ENCODE measurements at regions of chr17 and their contacts with region 1.

Region 1: GRCh38 chr17:27245230-27245696 is 48.7 kb upstream of the WSB1 start:
- DNase-seq: peak; percentile 91
- ATAC-seq: peak; percentile 86 to 91
- H3K4me3 ChIP-seq: peak overlapping the region; percentile 34
- H3K27ac ChIP-seq: peak overlapping the region; percentile 87
- H3K4me1 ChIP-seq: peaks cover 81% of the 10 kb centered on the region
- H3K27me3 ChIP-seq: no peaks in the 10 kb centered on the region
- CTCF ChIP-seq: peak; percentile 78

Region 2: DNA sequence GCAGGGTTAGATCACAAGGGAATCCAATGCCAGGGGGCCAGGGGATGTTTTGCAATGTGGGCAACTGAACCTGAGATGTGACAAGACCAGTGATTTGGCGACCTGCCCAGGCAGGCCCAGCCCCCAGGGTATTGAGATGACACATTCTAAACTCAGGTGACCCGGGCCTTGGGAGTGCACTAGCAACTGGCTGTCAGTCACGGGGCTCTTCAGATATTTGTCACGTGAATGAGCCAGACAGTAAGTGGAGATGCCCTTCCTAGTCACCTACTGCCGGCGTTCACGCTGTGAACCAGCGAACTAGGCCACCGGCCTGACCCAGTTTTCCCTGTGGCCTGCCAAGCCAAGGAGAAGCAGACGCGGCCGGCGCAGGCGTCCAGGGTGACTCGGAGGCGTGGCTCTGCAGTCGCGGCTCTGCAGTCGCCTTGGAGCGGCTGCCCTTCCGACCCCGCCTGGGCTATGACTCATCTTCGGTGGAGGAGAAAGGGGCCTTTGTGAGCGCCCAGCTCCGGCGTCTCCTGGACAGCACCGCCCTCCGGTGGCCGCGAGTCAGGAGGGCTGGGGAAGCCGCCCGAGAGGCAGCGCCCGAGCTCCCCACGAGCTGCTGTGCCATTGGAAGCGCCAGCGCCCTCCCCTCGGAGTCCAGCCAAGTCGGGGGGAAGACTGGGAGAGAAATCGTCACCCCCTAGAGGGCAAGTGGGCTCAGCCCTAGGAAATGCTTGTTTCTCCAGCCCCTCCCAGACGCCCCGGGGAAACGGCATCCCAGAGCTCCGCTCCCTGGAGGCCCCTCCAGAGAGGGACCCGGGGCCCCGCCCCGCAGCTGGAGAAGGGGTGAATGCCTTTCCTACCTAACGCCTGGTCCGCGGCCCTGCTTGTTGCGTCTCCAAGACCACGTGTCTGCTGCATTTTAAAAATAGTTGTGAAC is 87.5 kb after region 1 on chr17:
- intact Hi-C with region 1: loop called (anchors 10 kb)
- DNase-seq: peak; percentile 99
- ATAC-seq: peak; percentile 97 to 98
- H3K4me3 ChIP-seq: peak overlapping the region; percentile 61
- H3K27ac ChIP-seq: peak overlapping the region; percentile 92
- H3K4me1 ChIP-seq: peaks cover 35% of the 10 kb centered on the region
- H3K27me3 ChIP-seq: no peaks in the 10 kb centered on the region
- CTCF ChIP-seq: peak; percentile 93

Region 3: DNA sequence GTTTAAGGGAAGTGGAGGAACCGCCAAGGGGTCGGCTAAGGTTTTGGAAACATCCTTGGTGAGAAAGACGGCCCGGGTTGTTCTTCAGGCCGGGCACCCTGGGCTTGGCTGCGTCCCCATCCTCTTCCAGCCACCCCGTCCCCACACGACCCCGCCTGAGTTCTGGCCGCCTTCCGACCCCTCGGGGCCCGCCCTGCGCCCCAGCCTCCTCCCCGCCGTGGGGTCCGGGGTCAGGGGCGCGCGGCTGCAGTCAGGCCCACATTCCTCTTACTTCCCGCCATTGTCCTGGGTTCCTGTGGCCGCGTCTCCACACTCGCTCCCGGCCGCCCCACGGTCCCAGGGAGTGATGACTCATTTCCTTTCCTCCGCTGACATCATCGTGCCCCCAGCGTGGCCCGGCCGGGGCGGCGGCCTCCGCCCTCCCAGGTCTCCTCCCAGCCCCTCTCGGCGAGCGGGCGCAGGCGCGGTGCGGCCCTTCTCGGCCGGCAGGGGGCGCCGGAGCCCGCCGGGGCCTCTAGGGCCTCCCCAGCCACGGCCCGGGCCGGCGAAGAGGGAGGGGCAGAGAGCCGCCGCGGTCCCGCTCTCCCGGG is 108.3 kb after region 1 on chr17:
- intact Hi-C with region 1: no loop called
- DNase-seq: peak; percentile 92
- ATAC-seq: peak; percentile 94 to 98
- H3K4me3 ChIP-seq: peak overlapping the region; percentile 63
- H3K27ac ChIP-seq: peak overlapping the region; percentile 95
- H3K4me1 ChIP-seq: peaks cover 29% of the 10 kb centered on the region
- H3K27me3 ChIP-seq: no peaks in the 10 kb centered on the region
- CTCF ChIP-seq: peak; percentile 87